RWPE1 (cell line): ENCODE measurements at regions of chr15 and their contacts with region 1.

Region 1: DNA sequence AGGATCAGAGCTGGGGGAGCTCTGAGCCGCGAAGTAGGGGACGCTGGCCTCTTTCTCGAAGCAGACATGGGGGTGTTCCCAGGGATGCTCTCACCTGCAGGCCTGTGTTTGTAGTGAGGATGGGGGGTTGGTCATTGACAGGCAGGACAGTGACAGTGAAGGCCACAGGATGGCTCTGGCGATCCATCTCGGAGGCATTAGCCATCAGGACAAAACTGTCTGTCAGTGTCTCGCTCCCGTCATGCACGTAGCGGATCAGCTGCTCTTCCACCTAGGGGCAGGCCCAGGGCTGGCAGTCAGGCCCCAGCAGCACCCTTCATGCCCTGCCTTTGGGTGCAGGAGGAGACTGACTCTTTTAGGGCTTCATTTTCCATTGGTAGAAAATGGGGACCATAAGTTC is 28.0 kb downstream of the CSPG4 start:
- DNase-seq: no peak
- H3K27ac ChIP-seq: peak overlapping the region; percentile 53
- CTCF ChIP-seq: no peak

Region 2: GRCh38 chr15:75639709-75640482 is 44.7 kb before region 1 on chr15 and contains the start of gene IMP3:
- CTCF ChIA-PET with region 1: interaction called, 18 read pairs
- POLR2A ChIA-PET with region 1: interaction called, 3 read pairs
- DNase-seq: peak; percentile 99
- H3K27ac ChIP-seq: peak within 1 kb of the TSS; percentile 98
- CTCF ChIP-seq: no peak

Region 3: DNA sequence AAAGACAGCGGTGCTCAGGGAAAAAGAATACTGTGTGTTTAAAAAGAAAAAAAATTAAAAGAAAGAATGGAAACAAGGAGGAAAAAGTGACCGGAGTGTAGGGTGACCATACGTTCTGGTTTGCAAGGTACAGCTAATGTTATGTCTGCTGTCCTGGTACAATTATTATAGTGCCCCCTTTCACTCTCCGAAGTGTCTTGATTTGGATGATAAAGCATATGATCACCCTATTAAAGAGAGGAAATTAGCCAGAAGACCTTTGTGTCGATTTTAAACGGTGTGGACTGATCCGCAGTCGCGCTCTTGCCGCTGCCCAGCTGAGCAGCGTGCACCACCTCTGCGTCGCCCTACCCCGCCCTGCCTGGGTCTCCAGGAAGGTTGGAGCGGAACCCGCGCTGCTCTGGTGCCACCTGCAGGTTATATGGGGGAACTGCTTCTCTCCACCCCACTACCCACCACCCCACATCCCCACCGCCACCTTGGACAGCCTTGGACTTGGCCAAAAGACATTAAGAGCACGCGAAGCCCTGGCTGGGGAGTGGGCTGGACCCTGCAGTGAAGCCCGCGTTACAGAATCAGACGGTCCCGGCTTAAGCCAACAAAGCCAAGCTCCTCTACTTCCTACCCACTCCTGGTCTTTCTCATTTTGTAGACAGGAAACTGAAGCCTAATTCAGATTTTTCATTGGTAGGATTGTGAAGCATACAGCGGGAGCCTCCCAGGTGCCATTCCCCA is 117.4 kb after region 1 on chr15:
- CTCF ChIA-PET with region 1: interaction called, 13 read pairs
- POLR2A ChIA-PET with region 1: no interaction called
- DNase-seq: peak; percentile 95
- H3K27ac ChIP-seq: no peak overlapping the region
- CTCF ChIP-seq: peak; percentile 98